ENCODE measurements at regions of chr21 and their contacts with region 1.

Region 1: GRCh38 chr21:25350056-25350455 is 257.2 kb downstream of the MRPL39 start:
- DNase-seq: peak; percentile 45
- H3K4me3 ChIP-seq: no peak overlapping the region
- H3K27ac ChIP-seq: no peak overlapping the region
- H3K4me1 ChIP-seq: no peaks in the 10 kb centered on the region
- H3K27me3 ChIP-seq: no peaks in the 10 kb centered on the region
- CTCF ChIP-seq: peak; percentile 43
- POLR2A ChIP-seq: no peak

Region 2: DNA sequence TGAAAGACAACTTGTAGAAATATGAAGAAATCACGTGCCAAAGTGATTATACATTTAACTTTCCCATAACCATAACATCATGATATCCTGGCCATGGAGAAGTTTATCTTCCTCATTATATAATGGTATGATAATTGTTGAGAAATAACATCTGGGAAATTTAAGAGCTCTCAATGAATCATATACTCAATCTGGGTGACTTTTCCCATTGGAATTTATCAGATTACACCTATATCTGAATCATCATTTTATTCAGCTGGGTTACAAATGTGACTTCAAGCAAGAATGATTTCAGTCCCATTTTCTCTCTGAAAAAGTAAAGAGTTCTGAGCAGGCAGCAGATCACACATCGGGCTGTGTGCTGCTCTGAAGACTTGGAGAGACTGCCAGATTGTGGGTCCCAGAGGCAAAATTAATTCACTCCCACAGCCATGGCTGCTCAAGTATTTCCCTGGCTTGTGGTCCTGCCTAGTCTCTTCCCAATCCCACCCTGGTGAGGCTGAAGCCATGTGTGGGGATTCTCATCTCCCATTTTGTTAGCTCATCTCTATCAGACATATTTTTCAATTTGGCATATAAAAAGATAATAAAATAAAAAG is 20.7 kb before region 1 on chr21:
- CTCF ChIA-PET with region 1: interaction called, 11 read pairs
- POLR2A ChIA-PET with region 1: no interaction called
- dilution Hi-C with region 1: no loop called
- intact Hi-C with region 1: no loop called
- DNase-seq: no peak
- H3K4me3 ChIP-seq: no peak overlapping the region
- H3K27ac ChIP-seq: no peak overlapping the region
- H3K4me1 ChIP-seq: no peaks in the 10 kb centered on the region
- H3K27me3 ChIP-seq: no peaks in the 10 kb centered on the region
- CTCF ChIP-seq: no peak
- POLR2A ChIP-seq: no peak

Region 3: GRCh38 chr21:25370311-25370744 is 20.3 kb after region 1 on chr21:
- CTCF ChIA-PET with region 1: interaction called, 6 read pairs
- POLR2A ChIA-PET with region 1: no interaction called
- dilution Hi-C with region 1: no loop called
- intact Hi-C with region 1: loop called (anchors 1 kb)
- DNase-seq: peak; percentile 75
- H3K4me3 ChIP-seq: no peak overlapping the region
- H3K27ac ChIP-seq: peak overlapping the region; percentile 45
- H3K4me1 ChIP-seq: no peaks in the 10 kb centered on the region
- H3K27me3 ChIP-seq: no peaks in the 10 kb centered on the region
- CTCF ChIP-seq: no peak
- POLR2A ChIP-seq: no peak

Region 4: DNA sequence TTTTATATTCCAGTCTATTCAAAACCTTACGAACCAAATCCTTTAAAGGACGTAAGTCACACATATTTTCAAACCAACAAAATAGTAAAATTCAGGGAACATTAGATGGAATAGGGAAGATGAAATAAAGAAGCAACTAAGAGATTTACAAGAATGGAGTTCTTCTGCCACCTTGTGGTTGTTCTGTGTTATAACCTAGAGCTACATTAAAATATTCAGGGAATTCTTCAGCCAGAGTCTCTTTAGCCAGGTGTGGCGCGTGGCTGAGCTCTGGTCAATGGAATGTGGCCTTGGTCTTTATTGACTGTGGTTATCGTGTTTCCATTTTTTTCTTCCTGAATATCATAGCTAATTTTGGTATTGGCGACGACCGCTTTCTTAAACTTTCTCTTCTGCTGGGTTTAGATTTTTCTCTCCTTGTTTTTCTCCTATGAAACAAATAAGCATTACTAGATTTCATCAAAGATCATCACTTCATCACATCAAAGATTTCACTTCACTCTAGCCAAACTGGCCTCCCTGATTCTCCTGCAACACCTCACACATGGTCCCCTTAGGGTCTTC is 35.9 kb after region 1 on chr21:
- CTCF ChIA-PET with region 1: interaction called, 84 read pairs
- POLR2A ChIA-PET with region 1: no interaction called
- dilution Hi-C with region 1: no loop called
- intact Hi-C with region 1: loop called (anchors 1 kb)
- DNase-seq: peak; percentile 50
- H3K4me3 ChIP-seq: no peak overlapping the region
- H3K27ac ChIP-seq: no peak overlapping the region
- H3K4me1 ChIP-seq: no peaks in the 10 kb centered on the region
- H3K27me3 ChIP-seq: peaks cover 0 to 1% of the 10 kb centered on the region in 2 experiments
- CTCF ChIP-seq: peak; percentile 45 to 53
- POLR2A ChIP-seq: no peak

Region 5: DNA sequence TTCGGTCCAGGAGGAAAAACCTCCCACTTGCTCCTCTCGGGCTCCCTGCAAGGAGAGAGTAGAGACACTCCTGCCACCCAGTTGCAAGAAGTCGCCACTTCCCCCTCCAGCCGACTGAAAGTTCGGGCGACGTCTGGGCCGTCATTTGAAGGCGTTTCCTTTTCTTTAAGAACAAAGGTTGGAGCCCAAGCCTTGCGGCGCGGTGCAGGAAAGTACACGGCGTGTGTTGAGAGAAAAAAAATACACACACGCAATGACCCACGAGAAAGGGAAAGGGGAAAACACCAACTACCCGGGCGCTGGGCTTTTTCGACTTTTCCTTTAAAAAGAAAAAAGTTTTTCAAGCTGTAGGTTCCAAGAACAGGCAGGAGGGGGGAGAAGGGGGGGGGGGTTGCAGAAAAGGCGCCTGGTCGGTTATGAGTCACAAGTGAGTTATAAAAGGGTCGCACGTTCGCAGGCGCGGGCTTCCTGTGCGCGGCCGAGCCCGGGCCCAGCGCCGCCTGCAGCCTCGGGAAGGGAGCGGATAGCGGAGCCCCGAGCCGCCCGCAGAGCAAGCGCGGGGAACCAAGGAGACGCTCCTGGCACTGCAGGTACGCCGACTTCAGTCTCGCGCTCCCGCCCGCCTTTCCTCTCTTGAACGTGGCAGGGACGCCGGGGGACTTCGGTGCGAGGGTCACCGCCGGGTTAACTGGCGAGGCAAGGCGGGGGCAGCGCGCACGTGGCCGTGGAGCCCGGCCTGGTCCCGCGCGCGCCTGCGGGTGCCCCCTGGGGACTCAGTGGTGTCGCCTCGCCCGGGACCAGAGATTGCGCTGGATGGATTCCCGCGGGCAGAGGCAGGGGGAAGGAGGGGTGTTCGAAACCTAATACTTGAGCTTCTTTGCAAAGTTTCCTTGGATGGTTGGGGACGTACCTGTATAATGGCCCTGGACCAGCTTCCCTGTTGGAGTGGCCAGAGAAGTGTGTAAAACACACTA is 211.9 kb after region 1 on chr21:
- CTCF ChIA-PET with region 1: no interaction called
- POLR2A ChIA-PET with region 1: no interaction called
- dilution Hi-C with region 1: no loop called
- intact Hi-C with region 1: loop called (anchors 5 kb)
- DNase-seq: peak; percentile 82
- H3K4me3 ChIP-seq: peak overlapping the region; percentile 62 to 97 (median 96)
- H3K27ac ChIP-seq: peak overlapping the region; percentile 89
- H3K4me1 ChIP-seq: peaks cover 27% of the 10 kb centered on the region
- H3K27me3 ChIP-seq: no peaks in the 10 kb centered on the region
- CTCF ChIP-seq: peak in 1 of 2 donors; percentile 36
- POLR2A ChIP-seq: peak; percentile 82

Region 6: GRCh38 chr21:25862596-25862995 is 512.5 kb after region 1 on chr21:
- CTCF ChIA-PET with region 1: no interaction called
- POLR2A ChIA-PET with region 1: no interaction called
- dilution Hi-C with region 1: no loop called
- intact Hi-C with region 1: no loop called
- DNase-seq: no peak
- H3K4me3 ChIP-seq: no peak overlapping the region
- H3K27ac ChIP-seq: no peak overlapping the region
- H3K4me1 ChIP-seq: no peaks in the 10 kb centered on the region
- H3K27me3 ChIP-seq: peaks cover 1 to 7% of the 10 kb centered on the region in 2 experiments
- CTCF ChIP-seq: peak; percentile 60 to 62
- POLR2A ChIP-seq: no peak

Region 7: DNA sequence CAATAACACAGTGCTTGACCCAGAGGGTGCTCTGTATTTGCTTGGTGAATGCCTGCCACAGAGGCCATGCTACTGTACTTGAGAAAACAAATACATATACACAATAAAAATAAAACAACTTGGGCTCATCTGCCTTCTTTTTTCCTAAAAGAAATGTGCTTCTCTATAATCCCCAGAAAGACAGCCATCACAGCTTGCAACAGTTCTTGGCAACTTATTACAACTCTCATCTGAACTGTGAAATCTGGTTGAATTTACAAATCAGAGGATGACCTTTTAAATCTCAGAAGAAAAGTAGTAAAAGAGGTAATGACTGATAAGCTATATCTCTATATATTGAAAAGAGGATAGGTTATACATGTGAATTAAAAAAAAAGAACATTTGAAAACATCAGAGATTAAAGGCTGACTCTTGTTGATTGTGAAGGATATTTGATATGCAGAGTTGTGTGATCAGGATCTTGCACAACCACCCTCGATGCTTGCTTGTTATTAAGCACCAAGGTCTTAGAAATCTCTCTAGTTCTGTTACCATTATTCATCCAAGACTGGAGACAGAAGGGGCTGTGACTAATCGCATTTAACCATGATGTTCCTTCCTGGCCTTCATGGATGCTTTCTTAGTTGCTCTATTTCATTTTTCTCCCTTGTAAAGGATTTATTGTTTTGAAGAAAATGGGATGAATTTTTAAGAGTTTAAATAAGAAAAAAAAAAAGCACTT is 607.1 kb after region 1 on chr21:
- CTCF ChIA-PET with region 1: no interaction called
- POLR2A ChIA-PET with region 1: no interaction called
- dilution Hi-C with region 1: no loop called
- intact Hi-C with region 1: no loop called
- DNase-seq: peak; percentile 64
- H3K4me3 ChIP-seq: no peak overlapping the region
- H3K27ac ChIP-seq: peak overlapping the region; percentile 33
- H3K4me1 ChIP-seq: peaks cover 70% of the 10 kb centered on the region
- H3K27me3 ChIP-seq: no peaks in the 10 kb centered on the region
- CTCF ChIP-seq: no peak
- POLR2A ChIP-seq: no peak

Measured in endothelial cell of umbilical vein (primary cell).